ENCODE measurements at regions of chr3 and their contacts with region 1.

Region 1: GRCh38 chr3:39447637-39448483 is 19.6 kb upstream of the MOBP start:
- DNase-seq: peak; percentile 75
- ATAC-seq: peak; percentile 94
- H3K4me3 Mint-ChIP-seq: no peak overlapping the region
- H3K27ac Mint-ChIP-seq: no peak overlapping the region
- H3K4me1 Mint-ChIP-seq: no peaks in the 10 kb centered on the region
- H3K27me3 Mint-ChIP-seq: peaks cover 17% of the 10 kb centered on the region

Region 2: DNA sequence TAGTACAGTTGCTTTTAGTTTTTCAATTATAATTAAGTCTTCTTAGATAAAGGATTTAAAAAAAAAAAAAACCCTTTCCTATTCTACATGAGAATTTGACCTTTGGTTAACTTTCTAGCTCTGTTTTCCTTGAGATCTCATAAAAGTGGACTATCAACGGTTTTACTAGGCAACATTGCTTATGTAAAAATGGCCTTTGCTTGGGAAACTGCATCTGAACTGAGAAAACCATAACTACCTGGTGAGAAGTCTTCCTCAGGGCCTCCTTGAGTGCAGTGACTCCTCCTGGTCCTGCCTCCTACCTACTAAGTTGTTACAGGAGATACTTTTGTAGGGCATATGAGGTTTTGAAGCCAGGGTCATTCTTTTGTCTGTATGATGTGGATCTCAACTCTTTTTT is 1036.3 kb before region 1 on chr3:
- CTCF ChIA-PET with region 1: no interaction called
- POLR2A ChIA-PET with region 1: no interaction called
- DNase-seq: no peak
- ATAC-seq: no peak
- H3K4me3 Mint-ChIP-seq: no peak overlapping the region
- H3K27ac Mint-ChIP-seq: no peak overlapping the region
- H3K4me1 Mint-ChIP-seq: no peaks in the 10 kb centered on the region
- H3K27me3 Mint-ChIP-seq: no peaks in the 10 kb centered on the region

Region 3: GRCh38 chr3:39288300-39288808 is 159.5 kb before region 1 on chr3:
- CTCF ChIA-PET with region 1: no interaction called
- POLR2A ChIA-PET with region 1: no interaction called
- DNase-seq: peak; percentile 91
- ATAC-seq: peak; percentile 96
- H3K4me3 Mint-ChIP-seq: no peak overlapping the region
- H3K27ac Mint-ChIP-seq: peak overlapping the region; percentile 0
- H3K4me1 Mint-ChIP-seq: peaks cover 46% of the 10 kb centered on the region
- H3K27me3 Mint-ChIP-seq: peaks cover 3% of the 10 kb centered on the region

Region 4: GRCh38 chr3:39460677-39461076 is 12.8 kb after region 1 on chr3:
- CTCF ChIA-PET with region 1: interaction called, 22 read pairs
- POLR2A ChIA-PET with region 1: no interaction called
- DNase-seq: no peak
- ATAC-seq: no peak
- H3K4me3 Mint-ChIP-seq: no peak overlapping the region
- H3K27ac Mint-ChIP-seq: no peak overlapping the region
- H3K4me1 Mint-ChIP-seq: no peaks in the 10 kb centered on the region
- H3K27me3 Mint-ChIP-seq: peaks cover 21% of the 10 kb centered on the region

Region 5: DNA sequence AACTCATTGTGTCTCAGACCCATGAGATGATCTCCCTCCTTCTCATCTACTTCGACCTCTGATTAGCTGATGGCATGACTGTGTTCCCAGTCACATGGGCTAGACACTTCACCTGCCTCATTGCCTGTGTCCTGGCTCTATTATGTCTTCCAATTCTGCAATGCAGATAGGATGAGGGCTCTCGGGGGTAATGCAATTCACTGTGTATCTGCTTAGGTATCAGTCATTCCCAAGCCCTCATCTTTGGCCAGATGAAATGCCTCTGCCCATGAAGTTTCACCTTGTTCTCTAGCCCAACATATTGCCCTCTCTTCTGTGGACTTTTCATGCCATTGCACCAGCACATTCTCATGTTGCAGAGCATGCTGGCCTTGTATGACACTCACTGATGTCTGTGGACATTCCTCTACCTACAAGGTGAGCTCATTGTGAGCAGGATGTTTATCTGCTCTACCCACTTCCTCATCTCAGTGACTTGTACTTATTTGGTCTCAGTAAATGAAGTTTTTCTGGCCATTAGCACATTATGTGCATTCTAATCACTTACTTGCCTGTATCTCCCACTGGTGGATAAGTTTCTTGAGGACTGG is 51.9 kb after region 1 on chr3:
- CTCF ChIA-PET with region 1: interaction called, 76 read pairs
- POLR2A ChIA-PET with region 1: no interaction called
- DNase-seq: no peak
- ATAC-seq: no peak
- H3K4me3 Mint-ChIP-seq: no peak overlapping the region
- H3K27ac Mint-ChIP-seq: no peak overlapping the region
- H3K4me1 Mint-ChIP-seq: peaks cover 23% of the 10 kb centered on the region
- H3K27me3 Mint-ChIP-seq: peaks cover 51% of the 10 kb centered on the region

Measured in activated CD8-positive, alpha-beta T cell treated with anti-CD3 and anti-CD28 coated beads, Interleukin-2, amount 10 ng/mL, durations not matched to agents 7 days and 5 days (primary cell).